ENCODE measurements at regions of chr6 and their contacts with region 1.

Region 1: DNA sequence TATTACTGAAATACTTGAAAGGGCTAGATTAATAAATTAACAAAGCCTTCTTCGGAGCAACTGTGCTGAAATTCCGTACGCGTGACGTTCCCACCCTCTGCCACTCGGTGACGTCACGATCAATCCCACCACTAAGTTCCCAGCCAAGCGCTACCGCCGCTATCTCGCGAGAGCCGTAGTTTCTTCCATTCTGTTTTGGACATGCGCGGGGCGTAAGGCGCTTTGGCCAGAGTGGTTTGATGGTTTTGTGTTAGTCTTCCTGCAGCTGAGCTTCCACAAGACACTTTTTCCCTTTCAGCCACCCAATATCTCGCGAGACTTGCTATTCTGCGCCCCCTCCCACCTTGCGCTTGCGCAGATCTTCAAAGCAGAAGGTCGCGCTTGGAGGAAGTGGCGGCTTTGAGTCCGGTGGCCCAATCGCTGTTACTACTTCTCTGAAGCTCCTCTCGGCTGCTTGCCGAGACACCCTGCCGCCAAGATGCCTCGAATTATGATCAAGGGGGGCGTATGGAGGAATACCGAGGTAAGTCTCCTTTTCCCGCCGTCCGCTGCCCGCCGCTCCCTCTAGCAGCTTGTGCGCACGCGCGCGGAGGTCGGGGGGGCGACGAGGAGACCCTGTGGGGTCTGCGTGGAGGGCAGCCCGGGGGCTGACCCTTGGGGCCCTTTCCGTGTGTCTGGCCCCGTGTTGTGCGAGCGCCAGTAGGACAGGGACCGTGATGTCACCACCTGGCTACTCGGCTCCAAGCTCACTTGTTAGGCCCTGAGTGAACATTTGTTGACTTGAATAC is at the start of gene CDC5L:
- DNase-seq: peak; percentile 99
- H3K4me3 ChIP-seq: peak within 1 kb of the TSS; percentile 59 to 94 (median 76)
- H3K27ac ChIP-seq: peak within 1 kb of the TSS; percentile 90 to 98 (median 94)
- H3K4me1 ChIP-seq: peaks cover 0 to 34% (median 28%) of the 10 kb centered on the region in 4 donors
- H3K27me3 ChIP-seq: no peaks in the 10 kb centered on the region
- CTCF ChIP-seq: no peak
- EP300 ChIP-seq: peak in 1 of 4 donors; percentile 12
- POLR2A ChIP-seq: peak; percentile 68 to 88
- total RNA-seq, gene CDC5L: 18.0 to 24.6 (median 21.3) TPM

Region 2: DNA sequence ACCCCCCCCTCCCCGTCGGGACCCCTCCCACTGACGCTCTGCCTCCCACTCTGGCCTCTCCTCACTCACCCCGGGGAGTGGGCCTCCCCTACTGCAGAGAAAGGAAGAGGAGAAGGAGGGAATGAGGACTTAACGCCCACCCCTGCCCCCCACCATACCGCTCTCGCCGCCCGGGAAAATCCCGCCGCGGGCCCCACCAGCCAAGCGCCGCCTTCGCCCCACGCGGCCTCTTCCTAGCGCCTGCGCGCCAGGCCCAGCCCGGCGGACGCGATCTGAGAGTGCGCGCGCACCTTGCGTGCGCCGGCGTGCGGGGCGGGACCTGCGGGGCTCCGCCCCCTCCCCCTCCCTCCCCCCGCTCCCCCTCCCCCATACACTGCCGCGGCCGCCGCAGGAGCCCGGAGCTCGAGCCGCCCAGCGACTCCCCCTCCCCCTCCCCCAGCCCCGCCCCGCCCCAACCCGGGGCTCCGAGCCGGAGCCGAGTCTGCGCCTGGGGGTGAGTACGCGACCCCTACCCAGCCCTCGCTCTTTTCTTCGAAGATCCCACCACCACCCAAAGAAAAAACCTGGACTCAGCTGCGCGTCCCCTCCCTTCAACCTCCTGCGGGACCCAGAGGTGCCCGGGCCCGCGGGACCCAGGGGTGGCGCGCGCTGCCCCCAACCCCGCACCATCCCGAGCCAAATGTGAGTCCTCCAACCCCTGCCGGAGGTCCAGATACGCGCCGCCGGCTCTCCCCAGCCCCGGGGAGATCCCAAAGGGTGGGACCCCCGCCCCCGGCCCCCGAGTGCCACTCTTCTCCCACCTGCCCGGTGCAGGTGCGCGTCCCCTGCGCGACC is 260.1 kb before region 1 on chr6 and contains the starts of genes MRPL14 and TMEM63B:
- intact Hi-C with region 1: loop called (anchors 5 kb)
- DNase-seq: peak; percentile 94
- H3K4me3 ChIP-seq: peak within 1 kb of the TSS; percentile 89 to 100 (median 98)
- H3K27ac ChIP-seq: peak within 1 kb of the TSS; percentile 89 to 98 (median 94)
- H3K4me1 ChIP-seq: peaks cover 0 to 51% (median 50%) of the 10 kb centered on the region in 4 donors
- H3K27me3 ChIP-seq: no peaks in the 10 kb centered on the region
- CTCF ChIP-seq: no peak
- EP300 ChIP-seq: no peak
- POLR2A ChIP-seq: peak; percentile 65 to 67
- total RNA-seq, gene MRPL14: 32.4 to 55.8 (median 45.3) TPM
- total RNA-seq, gene TMEM63B: 10.0 to 21.3 (median 16.3) TPM